Psoas muscle (tissue), 8 donors: ENCODE measurements at regions of chr14 and their contacts with region 1.

Region 1: DNA sequence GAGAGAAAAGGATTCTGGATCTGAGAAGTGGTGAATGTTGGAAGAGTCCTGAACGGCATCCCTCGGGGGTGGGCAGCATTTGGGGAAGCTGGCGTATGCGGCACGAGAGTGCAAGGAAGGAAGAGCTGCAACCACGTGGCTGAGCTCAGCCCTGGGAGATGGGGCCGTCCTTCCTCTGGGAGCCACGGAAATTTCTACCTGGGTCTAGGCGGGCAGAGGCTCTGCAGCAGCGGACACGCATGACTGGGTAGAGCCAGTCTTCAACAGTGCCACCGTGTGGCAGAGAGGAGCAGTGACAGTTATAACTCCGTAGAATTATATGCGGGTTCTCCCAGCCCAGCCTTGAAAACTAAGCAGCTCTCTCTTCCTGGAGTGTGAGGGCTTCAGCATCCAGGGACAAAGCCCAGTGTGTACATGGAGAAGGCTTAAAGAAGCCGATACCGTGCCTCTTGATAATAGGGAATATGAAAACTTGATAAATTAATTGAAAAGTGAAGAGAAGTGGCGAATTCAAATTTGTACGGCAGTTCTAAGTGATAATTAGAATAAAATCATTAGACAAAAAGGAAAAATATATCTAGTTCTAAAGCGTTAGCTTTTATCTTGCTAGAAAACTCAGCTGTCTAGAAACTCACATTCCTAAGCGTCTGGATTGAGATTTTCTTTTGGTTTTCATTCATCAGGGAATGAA is 82.9 kb upstream of the STXBP6 start:
- DNase-seq: peak; percentile 55 to 68
- ATAC-seq: peak; percentile 54 to 88 (median 76)
- H3K4me3 ChIP-seq: no peak overlapping the region
- H3K27ac ChIP-seq: no peak overlapping the region
- H3K4me1 ChIP-seq: no peaks in the 10 kb centered on the region
- H3K27me3 ChIP-seq: peaks cover 0 to 8% (median 0%) of the 10 kb centered on the region in 3 donors
- CTCF ChIP-seq: peak; percentile 63

Region 2: GRCh38 chr14:24806061-24806678 is 326.7 kb before region 1 on chr14:
- intact Hi-C with region 1: loop called (anchors 5 kb)
- DNase-seq: peak; percentile 29 to 68
- ATAC-seq: no peak
- H3K4me3 ChIP-seq: no peak overlapping the region
- H3K27ac ChIP-seq: no peak overlapping the region
- H3K4me1 ChIP-seq: no peaks in the 10 kb centered on the region
- H3K27me3 ChIP-seq: no peaks in the 10 kb centered on the region
- CTCF ChIP-seq: peak; percentile 58